ENCODE measurements at regions of chr12 and their contacts with region 1.

Region 1: GRCh38 chr12:17928708-17929366 is 161.2 kb downstream of the RERGL start:
- DNase-seq: peak; percentile 22
- H3K4me3 Mint-ChIP-seq: no peak overlapping the region
- H3K27ac Mint-ChIP-seq: peak overlapping the region; percentile 72
- H3K4me1 Mint-ChIP-seq: peaks cover 11% of the 10 kb centered on the region
- H3K27me3 Mint-ChIP-seq: no peaks in the 10 kb centered on the region
- CTCF ChIP-seq: peak; percentile 38

Region 2: DNA sequence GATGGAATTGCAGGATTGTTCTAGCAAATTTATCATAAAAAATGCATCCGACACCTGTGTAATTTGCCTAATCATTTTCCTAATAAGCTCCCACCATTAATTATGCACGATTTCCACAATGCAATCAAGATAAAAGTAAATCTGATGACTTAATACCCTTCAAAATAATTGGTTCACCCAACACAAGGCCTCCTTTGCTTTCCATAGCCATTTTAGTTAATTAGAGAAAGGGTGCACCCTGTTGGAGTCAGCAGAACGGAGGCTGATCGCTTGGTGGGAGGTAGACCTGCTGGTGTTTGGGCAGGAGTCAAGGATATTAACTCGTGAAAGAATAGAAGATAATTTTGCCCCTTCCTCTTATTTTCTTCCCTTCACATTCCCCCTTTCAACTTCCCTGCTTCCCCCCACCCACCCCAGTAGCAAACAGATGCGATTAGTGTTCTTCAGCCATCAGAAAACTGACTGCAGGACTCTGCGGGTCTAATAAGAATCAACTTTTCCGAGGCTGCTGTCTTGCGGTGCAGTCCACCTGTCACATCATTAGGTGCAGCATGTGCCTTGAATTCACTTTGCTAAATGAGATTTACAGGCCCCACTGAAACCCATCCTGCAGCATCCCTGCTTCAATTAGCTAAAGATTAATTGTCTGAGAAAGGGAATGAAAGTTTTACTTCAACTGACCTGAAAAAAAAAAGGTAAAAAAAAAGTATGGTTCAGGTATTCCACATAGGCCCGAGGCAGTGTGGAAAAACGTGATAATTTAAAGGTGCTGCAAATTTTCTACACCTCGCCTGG is 769.1 kb before region 1 on chr12:
- CTCF ChIA-PET with region 1: no interaction called
- intact Hi-C with region 1: loop called (anchors 5 kb)
- DNase-seq: no peak
- H3K4me3 Mint-ChIP-seq: no peak overlapping the region
- H3K27ac Mint-ChIP-seq: no peak overlapping the region
- H3K4me1 Mint-ChIP-seq: no peaks in the 10 kb centered on the region
- H3K27me3 Mint-ChIP-seq: no peaks in the 10 kb centered on the region
- CTCF ChIP-seq: no peak

Region 3: DNA sequence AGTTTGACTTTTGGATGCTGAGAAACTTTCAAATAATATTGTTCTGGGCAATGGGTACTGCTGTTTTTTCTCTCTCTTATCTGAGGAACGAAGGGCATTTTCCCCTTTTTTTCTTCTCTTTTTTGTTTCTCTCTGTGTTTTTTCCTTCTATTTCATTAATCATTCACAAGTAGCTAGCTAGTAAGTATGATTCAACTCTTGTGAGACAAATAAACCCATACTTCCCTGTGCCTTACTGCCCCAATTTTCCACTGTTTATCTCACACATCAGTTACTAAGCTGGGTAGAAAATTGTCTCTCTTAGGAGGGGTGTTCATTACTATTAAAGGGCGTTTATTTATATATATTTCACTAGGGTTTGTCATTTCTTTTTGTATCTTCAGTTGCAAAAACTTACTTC is 276.4 kb before region 1 on chr12:
- CTCF ChIA-PET with region 1: no interaction called
- intact Hi-C with region 1: loop called (anchors 2 kb)
- DNase-seq: no peak
- H3K4me3 Mint-ChIP-seq: peak overlapping the region; percentile 18
- H3K27ac Mint-ChIP-seq: peak overlapping the region; percentile 12
- H3K4me1 Mint-ChIP-seq: peaks cover 23% of the 10 kb centered on the region
- H3K27me3 Mint-ChIP-seq: no peaks in the 10 kb centered on the region
- CTCF ChIP-seq: no peak